Activated T-helper 1 cell treated with anti-CD3 and anti-CD28 coated beads, Interleukin-12 subunit alpha, Interleukin-12 subunit beta, Interleukin-2, Interleukin-4 antibody, amounts not matched to agents 30 ng/mL and 10 ng/mL and 1 ng/mL, durations not matched to agents 14 hours and 24 hours and 36 hours (primary cell): ENCODE measurements at regions of chr19 and their contacts with region 1.

Region 1: GRCh38 chr19:29528350-29528945 is 2.7 kb downstream of the VSTM2B start:
- DNase-seq: peak; percentile 62
- H3K4me3 Mint-ChIP-seq: peak overlapping the region; percentile 72
- H3K27ac Mint-ChIP-seq: peak overlapping the region; percentile 79
- H3K4me1 Mint-ChIP-seq: peaks cover 20% of the 10 kb centered on the region
- H3K27me3 Mint-ChIP-seq: peaks cover 67% of the 10 kb centered on the region

Region 2: GRCh38 chr19:29263305-29264135 is 264.9 kb before region 1 on chr19:
- intact Hi-C with region 1: loop called (anchors 5 kb)
- DNase-seq: peak; percentile 14
- H3K4me3 Mint-ChIP-seq: no peak overlapping the region
- H3K27ac Mint-ChIP-seq: no peak overlapping the region
- H3K4me1 Mint-ChIP-seq: peaks cover 4% of the 10 kb centered on the region
- H3K27me3 Mint-ChIP-seq: peaks cover 14% of the 10 kb centered on the region

Region 3: GRCh38 chr19:29587518-29587986 is 59.1 kb after region 1 on chr19:
- intact Hi-C with region 1: loop called (anchors 1 kb)
- DNase-seq: peak; percentile 80
- H3K4me3 Mint-ChIP-seq: no peak overlapping the region
- H3K27ac Mint-ChIP-seq: peak overlapping the region; percentile 72
- H3K4me1 Mint-ChIP-seq: peaks cover 58% of the 10 kb centered on the region
- H3K27me3 Mint-ChIP-seq: peaks cover 3% of the 10 kb centered on the region

Region 4: DNA sequence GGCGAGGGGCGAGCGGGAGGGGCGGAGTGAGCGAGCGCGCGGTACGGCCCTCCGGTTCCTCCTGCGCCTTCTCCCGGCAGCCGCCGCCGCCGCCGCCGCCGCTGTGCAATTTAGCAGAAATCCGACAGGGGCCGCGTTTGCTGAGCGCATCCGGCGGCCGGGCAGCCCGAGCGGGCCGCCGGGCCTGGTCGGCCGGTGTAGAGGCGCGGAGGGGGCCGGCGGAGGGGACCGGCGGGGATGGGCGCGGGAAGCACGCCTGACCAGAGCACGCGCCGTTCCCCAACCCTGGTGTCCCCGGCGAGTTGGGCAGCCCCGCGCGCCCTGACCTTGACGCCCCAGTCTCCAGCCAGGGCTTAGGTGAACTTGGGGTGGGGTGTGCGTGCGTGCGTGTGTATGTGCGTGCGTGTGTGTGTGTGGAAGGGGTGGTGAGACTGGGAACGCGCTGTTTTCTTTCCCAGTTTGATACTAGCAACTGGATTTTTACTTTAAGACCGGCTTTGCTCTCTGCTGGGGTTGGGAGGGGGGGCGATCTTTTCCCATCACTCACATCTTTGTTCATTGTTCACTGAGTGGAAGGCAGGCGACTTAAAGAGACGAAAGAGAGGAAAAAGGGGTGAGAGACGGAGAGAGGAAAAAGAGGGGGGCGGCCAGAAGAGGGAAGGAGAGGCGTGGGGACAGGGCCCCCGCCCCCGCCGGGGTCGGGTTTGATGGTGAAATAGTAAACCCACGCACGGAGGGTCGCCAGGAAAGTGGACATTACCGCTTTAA is 699.4 kb after region 1 on chr19:
- intact Hi-C with region 1: loop called (anchors 2 kb)
- DNase-seq: peak; percentile 55
- H3K4me3 Mint-ChIP-seq: peak overlapping the region; percentile 3
- H3K27ac Mint-ChIP-seq: no peak overlapping the region
- H3K4me1 Mint-ChIP-seq: peaks cover 20% of the 10 kb centered on the region
- H3K27me3 Mint-ChIP-seq: peaks cover 61% of the 10 kb centered on the region